Activated T-helper 1 cell treated with anti-CD3 and anti-CD28 coated beads, Interleukin-12 subunit alpha, Interleukin-12 subunit beta, Interleukin-2, Interleukin-4 antibody, amounts not matched to agents 30 ng/mL and 10 ng/mL and 1 ng/mL, durations not matched to agents 14 hours and 24 hours and 36 hours (primary cell): ENCODE measurements at regions of chr15 and their contacts with region 1.

Region 1: DNA sequence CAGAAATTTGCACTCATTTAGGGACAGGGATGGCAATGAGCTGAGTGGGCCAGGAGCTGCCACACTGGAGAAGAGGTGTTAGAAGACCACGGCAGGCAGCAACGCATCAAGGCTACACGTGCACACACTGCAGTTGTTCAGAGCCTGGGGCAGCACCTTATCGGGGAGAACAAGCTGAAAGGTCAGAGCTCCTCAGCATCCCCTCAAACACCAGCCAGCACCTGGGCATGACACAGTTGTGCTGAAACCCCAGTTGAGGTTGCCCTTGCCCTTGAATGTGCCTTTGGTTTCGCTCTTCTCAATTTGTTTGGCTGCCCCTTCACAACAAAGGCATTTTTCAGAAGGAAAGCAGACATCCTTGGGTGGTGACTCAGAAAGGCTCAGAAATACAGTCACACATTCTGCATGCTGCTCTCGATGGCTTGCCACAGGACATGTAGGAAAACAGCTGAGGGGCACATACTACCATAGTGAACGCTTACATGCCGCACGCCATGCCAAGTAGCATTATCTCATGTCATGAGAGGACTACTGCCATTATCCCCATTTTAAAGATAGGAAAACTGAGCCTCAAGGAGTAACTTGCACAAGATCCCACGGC is 57.6 kb downstream of the ST8SIA2 start:
- DNase-seq: no peak
- H3K4me3 Mint-ChIP-seq: no peak overlapping the region
- H3K27ac Mint-ChIP-seq: no peak overlapping the region
- H3K4me1 Mint-ChIP-seq: no peaks in the 10 kb centered on the region
- H3K27me3 Mint-ChIP-seq: peaks cover 7% of the 10 kb centered on the region

Region 2: DNA sequence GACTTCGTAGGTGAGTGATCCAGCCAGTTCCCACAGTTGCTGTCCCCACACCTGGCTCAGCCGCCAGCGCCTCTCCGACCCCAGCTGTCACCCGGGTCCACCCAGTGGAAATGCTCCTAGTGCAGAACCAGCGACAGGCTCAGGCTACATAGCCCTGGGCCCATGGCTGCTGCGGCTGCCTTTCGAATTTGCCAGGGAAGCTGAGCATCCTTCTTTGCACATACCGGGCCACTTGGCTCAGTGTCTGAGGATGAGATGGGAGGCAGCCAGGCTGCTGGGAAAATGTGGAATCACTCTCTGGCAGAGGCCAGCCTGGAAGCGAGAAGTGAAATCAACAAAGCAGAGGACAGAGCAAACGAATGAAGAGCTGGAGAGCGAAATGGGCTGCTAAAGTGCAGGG is 22.4 kb after region 1 on chr15:
- intact Hi-C with region 1: loop called (anchors 1 kb)
- DNase-seq: no peak
- H3K4me3 Mint-ChIP-seq: no peak overlapping the region
- H3K27ac Mint-ChIP-seq: no peak overlapping the region
- H3K4me1 Mint-ChIP-seq: no peaks in the 10 kb centered on the region
- H3K27me3 Mint-ChIP-seq: peaks cover 2% of the 10 kb centered on the region

Region 3: GRCh38 chr15:92808978-92809879 is 357.9 kb after region 1 on chr15:
- intact Hi-C with region 1: no loop called
- DNase-seq: peak; percentile 100
- H3K4me3 Mint-ChIP-seq: peak overlapping the region; percentile 94
- H3K27ac Mint-ChIP-seq: peak overlapping the region; percentile 98
- H3K4me1 Mint-ChIP-seq: peaks cover 60% of the 10 kb centered on the region
- H3K27me3 Mint-ChIP-seq: no peaks in the 10 kb centered on the region